IMR-90 (cell line): ENCODE measurements at regions of chr11 and their contacts with region 1.

Region 1: GRCh38 chr11:114159802-114160632 is 100.5 kb downstream of the ZBTB16 start:
- DNase-seq: peak; percentile 90
- ATAC-seq: peak; percentile 73
- H3K4me3 ChIP-seq: no peak overlapping the region
- H3K27ac ChIP-seq: peak overlapping the region; percentile 31; the same call in 1 of the 2 replicates
- H3K4me1 ChIP-seq: peaks cover 16% of the 10 kb centered on the region; the same call in 1 of the 2 replicates
- H3K27me3 ChIP-seq: peaks cover 50% of the 10 kb centered on the region
- CTCF ChIP-seq: no peak
- POLR2A ChIP-seq: no peak
- RAD21 ChIP-seq: no peak; the same call in none of the 2 replicates

Region 2: GRCh38 chr11:113875234-113876073 is 284.6 kb before region 1 on chr11 and contains the start of gene USP28:
- CTCF ChIA-PET with region 1: no interaction called
- POLR2A ChIA-PET with region 1: no interaction called
- dilution Hi-C with region 1: no loop called
- in situ Hi-C with region 1: no loop called
- intact Hi-C with region 1: loop called (anchors 10 kb)
- DNase-seq: peak; percentile 95
- ATAC-seq: peak; percentile 97
- H3K4me3 ChIP-seq: peak within 1 kb of the TSS; percentile 69
- H3K27ac ChIP-seq: peak within 1 kb of the TSS; percentile 93
- H3K4me1 ChIP-seq: peaks cover 4% of the 10 kb centered on the region; the same call in 1 of the 2 replicates
- H3K27me3 ChIP-seq: no peaks in the 10 kb centered on the region
- CTCF ChIP-seq: no peak
- POLR2A ChIP-seq: peak; percentile 93
- RAD21 ChIP-seq: no peak
- total RNA-seq, gene USP28: 24.7 and 36.0 TPM in 2 replicates

Region 3: DNA sequence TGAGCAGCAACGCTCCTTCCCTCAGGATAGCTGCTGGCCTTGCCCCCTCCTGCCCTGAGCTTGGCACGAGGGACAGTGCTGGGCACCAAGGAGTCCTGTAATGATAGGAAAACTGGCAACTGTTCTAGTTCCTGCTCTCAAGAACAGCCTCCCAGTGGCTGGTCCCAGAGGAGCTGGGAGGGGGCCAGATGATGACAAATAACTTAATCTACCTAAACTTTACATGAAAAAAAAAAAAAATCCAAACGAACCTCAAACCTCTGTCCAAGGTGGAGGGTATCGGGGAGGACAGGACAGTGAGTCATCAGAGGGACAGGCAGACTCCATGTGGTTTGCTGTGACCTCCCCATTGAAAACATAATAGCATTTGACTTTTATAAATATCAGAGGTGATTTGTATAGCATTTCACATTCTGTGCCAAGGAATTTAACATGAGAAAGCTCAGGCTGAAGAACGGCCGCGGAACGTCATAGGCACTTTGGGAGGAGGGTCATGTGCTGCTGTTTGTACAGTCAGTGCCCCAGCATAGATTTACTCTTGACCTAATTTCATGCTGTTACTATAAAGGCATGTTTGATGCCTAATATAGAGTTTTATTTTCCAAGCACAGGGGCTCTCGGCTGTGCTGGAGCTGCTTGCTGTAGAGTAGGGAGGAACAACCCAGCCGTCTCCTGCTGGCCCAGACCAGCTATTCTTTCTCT is 37.9 kb after region 1 on chr11:
- CTCF ChIA-PET with region 1: no interaction called
- POLR2A ChIA-PET with region 1: no interaction called
- dilution Hi-C with region 1: no loop called
- in situ Hi-C with region 1: no loop called
- intact Hi-C with region 1: loop called (anchors 1 kb)
- DNase-seq: peak; percentile 71
- ATAC-seq: peak; percentile 89
- H3K4me3 ChIP-seq: no peak overlapping the region
- H3K27ac ChIP-seq: peak overlapping the region; percentile 43; the same call in 1 of the 2 replicates
- H3K4me1 ChIP-seq: peaks cover 7% of the 10 kb centered on the region; the same call in 1 of the 2 replicates
- H3K27me3 ChIP-seq: peaks cover 12% of the 10 kb centered on the region; the same call in 1 of the 2 replicates
- CTCF ChIP-seq: no peak
- POLR2A ChIP-seq: no peak
- RAD21 ChIP-seq: no peak